Esophagus squamous epithelium (tissue), 5 donors: ENCODE measurements at regions of chr12 and their contacts with region 1.

Region 1: DNA sequence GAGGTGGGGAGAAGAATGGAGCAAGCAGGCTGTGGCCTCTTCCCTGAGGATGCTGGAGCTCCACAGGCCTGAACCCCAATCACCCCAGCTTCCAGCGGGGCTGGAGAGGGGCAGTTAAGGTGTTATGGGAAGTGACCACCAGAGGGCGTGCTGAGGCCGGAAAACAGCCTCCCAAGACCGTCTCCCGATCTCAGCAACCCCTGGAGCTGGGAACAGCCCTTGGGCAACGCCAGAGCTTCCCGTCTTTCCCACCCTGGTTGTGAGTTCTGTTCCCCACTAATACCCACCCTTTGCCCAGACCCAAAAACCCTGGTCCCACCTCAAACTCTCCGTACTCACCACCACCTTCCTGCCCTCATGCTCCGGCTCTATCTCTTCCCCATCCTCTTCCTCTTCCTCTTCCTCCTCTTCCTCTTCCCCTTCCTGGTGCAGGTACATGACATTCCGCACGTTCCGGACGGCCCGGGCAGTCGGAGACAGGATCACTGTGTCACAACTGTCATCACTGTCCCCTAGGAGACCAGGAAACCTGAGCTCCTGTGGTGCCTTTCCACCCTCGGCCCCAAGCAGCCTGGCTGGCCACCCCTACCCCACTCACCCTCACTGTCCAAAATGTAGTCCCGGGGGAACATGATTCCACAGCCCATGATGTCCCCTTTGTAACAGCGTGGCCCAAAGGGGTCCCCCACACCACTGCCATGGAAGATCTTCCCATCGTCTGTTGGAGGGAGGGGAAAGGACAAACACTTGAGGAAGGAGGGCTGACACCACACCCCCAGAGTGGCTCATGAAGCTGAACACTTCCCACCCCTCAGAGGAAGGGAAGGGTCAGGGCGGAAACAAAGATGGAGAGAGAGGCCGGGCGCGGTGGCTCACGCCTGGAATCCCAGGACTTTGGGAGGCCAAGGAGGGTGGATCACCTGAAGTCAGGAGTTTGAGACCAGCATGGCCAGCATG is 12.9 kb downstream of the SPRYD3 start:
- DNase-seq: no peak
- H3K4me3 ChIP-seq: no peak overlapping the region
- H3K27ac ChIP-seq: peak overlapping the region in 3 of 4 donors; percentile 68 to 80 (median 74)
- H3K4me1 ChIP-seq: peaks cover 22 to 99% (median 70%) of the 10 kb centered on the region in 3 donors
- H3K27me3 ChIP-seq: no peaks in the 10 kb centered on the region
- CTCF ChIP-seq: peak; percentile 74 to 94 (median 91)
- POLR2A ChIP-seq: no peak

Region 2: DNA sequence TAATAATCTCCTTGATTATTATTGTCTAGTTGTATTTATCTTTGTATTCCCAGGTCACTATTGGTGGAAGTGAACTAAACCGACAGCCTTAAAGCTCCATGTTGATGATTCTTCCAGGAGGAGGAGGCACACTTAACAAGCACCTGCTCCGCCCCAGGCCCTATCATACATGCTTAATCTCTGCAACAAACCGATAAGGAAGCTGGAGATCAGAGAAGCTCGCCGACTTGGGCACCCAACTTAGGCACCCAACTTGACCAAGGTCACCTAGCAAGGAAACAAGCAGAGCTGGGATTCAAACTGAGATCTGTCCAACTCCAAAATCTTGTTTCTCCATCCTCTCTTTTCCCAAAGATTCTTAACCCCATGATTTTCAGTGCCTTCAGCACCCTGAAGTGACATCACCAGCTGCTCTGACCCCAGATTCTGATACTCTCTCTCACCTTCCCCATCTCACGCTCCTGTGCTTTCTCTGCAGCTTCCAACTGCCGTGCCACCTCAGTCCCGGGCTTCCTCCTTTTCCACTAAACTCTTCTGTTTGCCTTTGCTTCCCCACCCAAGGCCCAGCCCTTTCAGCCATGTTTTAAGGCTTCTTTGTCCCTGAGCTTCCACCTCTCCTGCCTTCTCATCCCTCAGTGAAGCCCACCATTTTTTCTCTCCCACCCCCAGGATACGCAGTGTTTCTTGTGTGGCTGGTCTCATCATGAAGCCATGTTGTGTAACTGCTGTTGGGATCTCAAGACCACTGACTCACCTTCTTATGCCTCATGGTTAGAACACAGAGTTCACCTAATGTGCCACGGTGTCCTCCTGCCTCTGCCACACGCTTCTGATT is 124.0 kb before region 1 on chr12:
- intact Hi-C with region 1: no loop called
- DNase-seq: no peak
- H3K4me3 ChIP-seq: no peak overlapping the region
- H3K27ac ChIP-seq: no peak overlapping the region
- H3K4me1 ChIP-seq: peaks cover 0 to 18% (median 0%) of the 10 kb centered on the region in 3 donors
- H3K27me3 ChIP-seq: peaks cover 0 to 8% (median 0%) of the 10 kb centered on the region in 4 donors
- CTCF ChIP-seq: no peak
- POLR2A ChIP-seq: no peak

Region 3: DNA sequence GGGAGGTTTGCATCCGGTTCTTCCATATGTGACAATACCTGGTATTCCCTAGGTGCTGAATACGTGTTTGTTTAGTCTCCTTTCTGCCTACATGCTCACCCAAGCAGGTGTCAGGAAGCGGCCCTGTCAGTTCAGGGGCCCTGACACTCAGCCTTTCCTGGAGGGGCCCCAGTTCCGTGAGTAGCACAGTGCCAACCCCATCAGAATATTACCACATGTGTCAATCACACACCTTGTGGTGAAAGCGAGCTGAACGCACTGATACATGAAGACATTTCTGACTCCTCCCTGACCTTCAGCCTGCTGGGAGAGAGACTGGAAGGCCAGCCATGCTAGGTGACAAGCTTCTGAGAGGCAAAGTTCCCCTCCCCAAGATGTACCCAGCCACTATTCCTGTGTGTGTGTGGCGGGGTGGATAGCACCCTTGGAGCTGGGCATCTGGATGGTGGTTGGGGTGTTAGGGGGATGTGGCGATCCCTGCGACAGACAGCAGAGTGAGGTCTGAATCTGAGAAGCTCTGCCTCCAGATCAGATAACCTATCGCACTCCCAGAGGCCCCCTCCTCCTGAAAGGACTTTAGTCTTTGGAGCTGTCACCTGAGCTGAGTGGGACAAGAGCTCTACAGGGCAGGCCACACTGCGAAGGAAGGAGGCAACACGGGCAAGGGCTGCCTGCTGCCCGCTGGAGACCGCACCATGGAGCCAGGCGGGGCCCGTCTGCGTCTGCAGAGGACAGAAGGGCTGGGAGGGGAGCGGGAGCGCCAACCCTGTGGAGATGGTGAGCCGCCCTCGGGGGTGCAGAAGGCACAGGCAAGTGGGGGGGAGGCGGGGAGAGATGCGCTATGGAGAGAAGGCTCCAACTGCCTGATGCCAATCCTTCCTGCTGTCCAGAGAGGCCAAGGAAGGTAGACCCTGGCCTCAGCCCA is 36.9 kb after region 1 on chr12 and contains the start of gene SOAT2:
- intact Hi-C with region 1: loop called (anchors 5 kb)
- DNase-seq: no peak
- H3K4me3 ChIP-seq: no peak within 1 kb of the TSS
- H3K27ac ChIP-seq: peak within 1 kb of the TSS in 1 of 4 donors; percentile 20
- H3K4me1 ChIP-seq: peaks cover 13 to 47% (median 17%) of the 10 kb centered on the region in 3 donors
- H3K27me3 ChIP-seq: no peaks in the 10 kb centered on the region
- CTCF ChIP-seq: no peak
- POLR2A ChIP-seq: no peak
- total RNA-seq, gene SOAT2: not detected